AG04449 (cell line): ENCODE measurements at regions of chr16 and their contacts with region 1.

Region 1: GRCh38 chr16:2155091-2156021 is at the start of gene TRAF7:
- DNase-seq: peak; percentile 100
- H3K4me3 ChIP-seq: peak within 1 kb of the TSS; percentile 99
- CTCF ChIP-seq: no peak

Region 2: GRCh38 chr16:1922357-1922756 is 233.0 kb before region 1 on chr16:
- CTCF ChIA-PET with region 1: no interaction called
- POLR2A ChIA-PET with region 1: no interaction called
- DNase-seq: no peak
- H3K4me3 ChIP-seq: no peak overlapping the region
- CTCF ChIP-seq: no peak

Region 3: GRCh38 chr16:1971796-1972489 is 183.4 kb before region 1 on chr16 and contains the start of gene TBL3:
- CTCF ChIA-PET with region 1: no interaction called
- POLR2A ChIA-PET with region 1: interaction called, 14 read pairs
- DNase-seq: peak; percentile 49
- H3K4me3 ChIP-seq: peak within 1 kb of the TSS; percentile 85
- CTCF ChIP-seq: no peak

Region 4: GRCh38 chr16:2023098-2023925 is 132.0 kb before region 1 on chr16:
- CTCF ChIA-PET with region 1: interaction called, 4 read pairs
- POLR2A ChIA-PET with region 1: interaction called, 11 read pairs
- DNase-seq: no peak
- H3K4me3 ChIP-seq: peak overlapping the region; percentile 46
- CTCF ChIP-seq: peak; percentile 98

Region 5: DNA sequence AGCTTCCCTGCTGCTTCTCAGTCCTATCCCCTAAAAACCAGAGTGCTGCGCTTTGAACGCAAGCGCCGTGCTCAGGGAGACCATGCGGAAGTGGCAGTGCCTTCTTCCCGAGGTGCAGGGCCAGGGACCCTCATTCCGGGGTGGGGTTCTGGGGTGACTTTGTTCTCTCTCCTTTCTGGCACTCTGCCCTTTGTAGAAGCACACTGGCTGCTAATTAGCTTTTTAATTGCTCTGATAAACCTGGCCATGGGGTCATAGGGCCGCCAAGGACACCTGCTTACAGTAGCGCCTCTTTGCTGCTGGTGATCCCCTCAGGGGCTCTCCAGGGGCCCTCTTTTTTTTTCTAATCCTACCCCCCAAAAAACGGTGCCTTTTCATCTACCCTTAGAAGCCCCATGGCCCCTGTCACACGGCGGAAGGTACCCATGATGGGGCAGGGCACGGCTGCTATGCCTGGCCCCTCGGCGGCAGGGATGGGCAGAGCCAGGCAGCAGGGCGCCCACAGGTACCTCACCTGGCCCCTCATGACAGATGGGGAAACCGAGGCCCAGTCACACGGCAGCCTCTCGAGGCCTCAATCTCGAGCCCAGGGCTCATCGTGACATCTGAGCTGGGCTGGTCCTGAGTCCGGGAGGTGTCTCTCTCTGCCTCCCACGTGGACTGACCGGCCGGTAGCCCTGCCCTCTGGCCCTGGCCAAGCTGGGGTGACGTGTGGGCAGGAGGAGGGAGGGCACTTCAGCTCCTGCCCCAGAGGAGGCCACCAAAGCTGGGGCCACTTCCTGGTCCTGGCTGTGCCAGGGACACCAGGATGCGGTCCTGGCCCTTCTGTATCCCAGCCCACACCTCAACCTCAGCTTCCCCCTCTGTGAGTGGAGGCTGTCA is 11.6 kb after region 1 on chr16:
- CTCF ChIA-PET with region 1: interaction called, 4 read pairs
- POLR2A ChIA-PET with region 1: interaction called, 12 read pairs
- DNase-seq: no peak
- H3K4me3 ChIP-seq: no peak overlapping the region
- CTCF ChIP-seq: no peak

Region 6: GRCh38 chr16:2213817-2214720 is 58.7 kb after region 1 on chr16:
- CTCF ChIA-PET with region 1: no interaction called
- POLR2A ChIA-PET with region 1: interaction called, 17 read pairs
- DNase-seq: no peak
- H3K4me3 ChIP-seq: peak overlapping the region; percentile 67
- CTCF ChIP-seq: no peak

Region 7: DNA sequence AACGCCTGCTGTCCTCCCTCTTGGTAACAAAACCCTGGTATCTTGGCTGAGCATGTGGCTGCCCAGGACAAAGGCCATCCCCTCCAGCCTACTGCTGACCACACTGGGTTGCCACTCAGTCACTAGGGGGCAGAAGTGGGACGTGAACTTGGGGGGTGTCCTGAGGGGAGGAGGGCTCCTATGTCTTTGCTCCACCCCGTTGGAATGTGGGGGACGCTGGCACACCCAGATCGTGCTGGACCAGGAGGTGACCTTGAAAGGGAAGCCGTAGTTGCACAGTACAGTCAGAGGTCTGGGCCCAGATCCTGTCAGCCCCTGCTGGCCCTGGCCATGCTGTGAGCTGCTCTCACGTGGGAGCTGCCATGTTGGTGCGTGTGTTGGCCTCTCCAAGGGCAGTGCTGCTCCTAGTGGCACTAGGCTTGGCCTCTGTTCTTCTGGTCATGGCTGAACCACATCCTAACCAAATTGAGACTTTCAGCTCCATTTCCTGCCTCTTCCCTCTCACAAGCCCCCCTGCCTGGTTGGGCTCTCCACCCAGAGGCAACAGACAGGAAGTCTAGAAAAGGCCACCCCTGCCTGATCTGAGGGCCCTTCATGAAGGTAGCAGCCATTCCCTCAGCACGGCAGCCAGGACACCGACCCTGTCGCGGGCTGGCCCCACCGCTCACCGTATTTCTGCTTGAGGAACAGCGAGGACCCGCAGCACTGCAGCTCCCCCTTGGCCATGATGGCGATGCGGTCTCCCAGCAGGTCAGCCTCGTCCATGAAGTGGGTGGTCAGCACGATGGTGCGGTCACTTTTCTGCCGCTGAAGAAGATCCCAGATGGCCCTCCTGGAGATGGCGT is 141.5 kb after region 1 on chr16:
- CTCF ChIA-PET with region 1: no interaction called
- POLR2A ChIA-PET with region 1: no interaction called
- DNase-seq: no peak
- H3K4me3 ChIP-seq: no peak overlapping the region
- CTCF ChIP-seq: peak; percentile 50